Right ventricle myocardium superior (tissue), 1 donor: ENCODE measurements at regions of chr2 and their contacts with region 1.

Region 1: GRCh38 chr2:9565436-9566153 is 10.0 kb upstream of the ADAM17 start:
- DNase-seq: peak; percentile 78
- ATAC-seq: peak; percentile 94

Region 2: GRCh38 chr2:9440058-9440727 is 125.4 kb before region 1 on chr2:
- intact Hi-C with region 1: no loop called
- DNase-seq: no peak
- ATAC-seq: no peak

Region 3: GRCh38 chr2:9629222-9630000 is 63.8 kb after region 1 on chr2:
- intact Hi-C with region 1: loop called (anchors 10 kb)
- DNase-seq: no peak
- ATAC-seq: no peak

Region 4: GRCh38 chr2:9712263-9712662 is 146.7 kb after region 1 on chr2:
- intact Hi-C with region 1: no loop called
- DNase-seq: no peak
- ATAC-seq: peak; percentile 39